ENCODE measurements at regions of chr2 and their contacts with region 1.

Region 1: GRCh38 chr2:227817850-227818674 is 4.4 kb downstream of the CCL20 start:
- DNase-seq: peak; percentile 97
- H3K4me3 Mint-ChIP-seq: no peak overlapping the region
- H3K27ac Mint-ChIP-seq: peak overlapping the region; percentile 80
- H3K4me1 Mint-ChIP-seq: peaks cover 34% of the 10 kb centered on the region
- H3K27me3 Mint-ChIP-seq: peaks cover 11% of the 10 kb centered on the region

Region 2: DNA sequence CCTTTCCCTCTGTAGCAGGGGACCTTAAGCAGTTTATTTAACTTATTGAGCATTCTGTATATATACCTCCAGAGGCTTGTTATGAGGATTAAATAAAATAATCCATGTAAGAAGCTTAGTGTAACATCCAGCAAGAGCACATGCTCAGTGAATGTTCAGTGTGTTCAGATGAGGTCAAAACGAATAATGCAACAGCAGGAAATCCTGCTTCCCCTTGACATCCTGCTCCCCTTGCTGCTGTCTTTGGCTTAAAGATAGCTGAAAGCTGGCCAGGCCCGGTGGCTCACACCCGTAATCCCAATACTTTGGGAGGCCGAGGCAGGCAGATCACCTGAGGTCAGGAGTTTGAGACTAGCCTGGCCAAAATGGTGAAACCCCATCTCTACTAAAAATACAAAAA is 722.7 kb before region 1 on chr2:
- CTCF ChIA-PET with region 1: no interaction called
- intact Hi-C with region 1: no loop called
- DNase-seq: no peak
- H3K4me3 Mint-ChIP-seq: no peak overlapping the region
- H3K27ac Mint-ChIP-seq: no peak overlapping the region
- H3K4me1 Mint-ChIP-seq: no peaks in the 10 kb centered on the region
- H3K27me3 Mint-ChIP-seq: peaks cover 2% of the 10 kb centered on the region

Region 3: GRCh38 chr2:227370791-227371312 is 447.2 kb before region 1 on chr2:
- CTCF ChIA-PET with region 1: no interaction called
- intact Hi-C with region 1: loop called (anchors 2 kb)
- DNase-seq: peak; percentile 44
- H3K4me3 Mint-ChIP-seq: no peak overlapping the region
- H3K27ac Mint-ChIP-seq: peak overlapping the region; percentile 22
- H3K4me1 Mint-ChIP-seq: peaks cover 25% of the 10 kb centered on the region
- H3K27me3 Mint-ChIP-seq: no peaks in the 10 kb centered on the region

Region 4: DNA sequence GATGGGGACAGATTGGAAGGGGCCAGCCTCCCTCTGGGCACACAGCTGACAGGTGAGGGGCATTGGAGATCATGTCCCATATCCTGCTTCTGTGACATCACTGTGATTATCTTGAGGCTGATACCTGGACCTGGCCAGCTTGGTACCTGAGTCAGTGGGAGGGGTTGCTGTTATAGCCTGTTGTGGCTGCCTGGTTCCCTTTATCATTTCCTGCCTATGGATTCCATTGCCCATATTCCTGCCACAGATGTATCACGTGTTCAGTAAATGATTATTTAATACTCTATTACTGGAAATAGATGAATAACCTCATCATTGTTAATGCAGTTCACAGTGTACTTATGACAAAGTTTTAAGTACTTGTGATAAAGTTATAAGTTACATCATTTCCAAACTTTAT is 422.5 kb before region 1 on chr2:
- CTCF ChIA-PET with region 1: no interaction called
- intact Hi-C with region 1: no loop called
- DNase-seq: no peak
- H3K4me3 Mint-ChIP-seq: no peak overlapping the region
- H3K27ac Mint-ChIP-seq: peak overlapping the region; percentile 8
- H3K4me1 Mint-ChIP-seq: peaks cover 6% of the 10 kb centered on the region
- H3K27me3 Mint-ChIP-seq: no peaks in the 10 kb centered on the region

Region 5: DNA sequence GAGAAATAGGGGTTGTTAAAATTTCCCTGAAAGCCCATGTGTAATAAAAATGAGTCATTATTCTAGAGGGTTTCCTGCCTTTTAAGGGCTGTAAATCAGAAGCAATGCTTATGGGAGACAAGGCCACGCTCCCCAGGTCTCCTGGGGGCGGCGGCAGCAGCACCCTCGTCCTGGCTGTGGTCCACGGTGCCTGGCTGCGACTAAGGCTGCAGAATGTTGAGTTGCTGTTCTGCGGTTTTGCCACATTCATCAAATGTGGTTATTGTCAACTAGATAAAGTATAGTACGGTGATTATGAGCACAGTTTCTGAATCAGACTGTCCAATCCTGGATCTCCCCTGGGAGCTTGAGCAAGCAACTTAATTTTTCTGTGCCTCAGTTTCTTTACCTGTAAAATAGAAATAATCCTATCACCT is 358.0 kb before region 1 on chr2:
- CTCF ChIA-PET with region 1: no interaction called
- intact Hi-C with region 1: loop called (anchors 1 kb)
- DNase-seq: peak; percentile 85
- H3K4me3 Mint-ChIP-seq: peak overlapping the region; percentile 65
- H3K27ac Mint-ChIP-seq: peak overlapping the region; percentile 99
- H3K4me1 Mint-ChIP-seq: peaks cover 85% of the 10 kb centered on the region
- H3K27me3 Mint-ChIP-seq: no peaks in the 10 kb centered on the region

Region 6: GRCh38 chr2:227774011-227774624 is 43.9 kb before region 1 on chr2:
- CTCF ChIA-PET with region 1: interaction called, 5 read pairs
- intact Hi-C with region 1: loop called (anchors 1 kb)
- DNase-seq: peak; percentile 14
- H3K4me3 Mint-ChIP-seq: no peak overlapping the region
- H3K27ac Mint-ChIP-seq: peak overlapping the region; percentile 67
- H3K4me1 Mint-ChIP-seq: peaks cover 17% of the 10 kb centered on the region
- H3K27me3 Mint-ChIP-seq: no peaks in the 10 kb centered on the region

Region 7: DNA sequence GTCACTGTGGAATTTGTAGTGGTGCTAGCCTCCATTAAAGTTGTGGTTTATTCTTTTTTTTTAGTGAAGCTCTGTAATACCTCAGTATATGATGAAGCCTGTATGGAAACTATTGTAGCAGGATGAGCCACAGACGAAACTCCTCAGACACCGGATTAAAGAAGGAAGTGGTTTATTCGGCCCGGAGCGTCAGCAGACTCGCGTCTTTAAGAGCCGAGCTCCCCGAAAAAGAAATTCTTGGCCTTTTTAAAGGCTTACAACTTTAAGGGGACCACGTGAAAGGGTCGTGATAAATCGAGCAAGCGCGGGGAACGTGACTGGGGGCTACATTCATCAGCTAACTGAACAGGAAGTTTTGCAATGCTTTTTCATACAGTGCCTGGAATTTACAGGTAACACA is 12.5 kb before region 1 on chr2:
- CTCF ChIA-PET with region 1: no interaction called
- intact Hi-C with region 1: loop called (anchors 1 kb)
- DNase-seq: peak; percentile 60
- H3K4me3 Mint-ChIP-seq: peak overlapping the region; percentile 73
- H3K27ac Mint-ChIP-seq: peak overlapping the region; percentile 90
- H3K4me1 Mint-ChIP-seq: peaks cover 13% of the 10 kb centered on the region
- H3K27me3 Mint-ChIP-seq: peaks cover 1% of the 10 kb centered on the region

Region 8: DNA sequence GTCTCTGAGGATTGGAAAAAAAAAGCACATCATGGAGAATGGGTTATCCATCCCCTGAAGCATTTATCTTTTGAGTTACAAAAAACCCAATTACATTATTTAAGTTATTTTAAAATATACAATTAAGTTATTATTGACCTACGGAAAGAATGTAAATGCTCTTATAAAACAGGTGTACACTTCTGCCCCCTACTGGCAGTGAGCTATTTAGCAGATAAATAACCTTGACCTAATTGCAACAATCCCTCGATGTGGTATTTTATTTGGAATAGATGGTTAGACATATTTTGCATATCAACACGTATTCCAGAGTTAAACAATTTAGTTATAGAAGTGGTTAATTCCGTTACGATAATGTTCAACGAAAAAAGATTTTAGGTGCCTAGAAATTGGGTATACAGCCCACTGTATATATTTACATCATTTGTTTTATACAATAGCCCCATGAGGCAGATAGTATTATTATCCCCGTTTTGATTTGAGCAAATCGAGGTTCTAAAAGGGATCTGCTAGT is 44.2 kb after region 1 on chr2:
- CTCF ChIA-PET with region 1: interaction called, 10 read pairs
- intact Hi-C with region 1: no loop called
- DNase-seq: peak; percentile 54
- H3K4me3 Mint-ChIP-seq: no peak overlapping the region
- H3K27ac Mint-ChIP-seq: no peak overlapping the region
- H3K4me1 Mint-ChIP-seq: peaks cover 2% of the 10 kb centered on the region
- H3K27me3 Mint-ChIP-seq: no peaks in the 10 kb centered on the region

Measured in activated naive CD4-positive, alpha-beta T cell treated with anti-CD3 and anti-CD28 coated beads for 36 hours (primary cell).